ENCODE measurements at regions of chr12 and their contacts with region 1.

Region 1: GRCh38 chr12:54368709-54369583 is 4.7 kb upstream of the GPR84 start:
- DNase-seq: peak; percentile 81 to 88 (median 84)
- H3K4me3 ChIP-seq: peak overlapping the region in 1 of 2 donors; percentile 27
- H3K4me3 Mint-ChIP-seq: peak overlapping the region; percentile 63 to 90 (median 76)
- H3K27ac ChIP-seq: peak overlapping the region; percentile 37
- H3K27ac Mint-ChIP-seq: peak overlapping the region; percentile 30 to 86 (median 79)
- H3K4me1 ChIP-seq: peaks cover 33% of the 10 kb centered on the region
- H3K4me1 Mint-ChIP-seq: peaks cover 20 to 50% (median 31%) of the 10 kb centered on the region in 4 donors
- H3K27me3 ChIP-seq: no peaks in the 10 kb centered on the region
- H3K27me3 Mint-ChIP-seq: peaks cover 0 to 3% of the 10 kb centered on the region in 2 donors

Region 2: GRCh38 chr12:54220092-54220557 is 148.8 kb before region 1 on chr12:
- CTCF ChIA-PET with region 1: interaction called, 6 read pairs
- POLR2A ChIA-PET with region 1: interaction called, 4 read pairs
- intact Hi-C with region 1: loop called (anchors 1 kb)
- DNase-seq: peak; percentile 51 to 66 (median 56)
- H3K4me3 ChIP-seq: no peak overlapping the region
- H3K4me3 Mint-ChIP-seq: no peak overlapping the region
- H3K27ac ChIP-seq: no peak overlapping the region
- H3K27ac Mint-ChIP-seq: no peak overlapping the region
- H3K4me1 ChIP-seq: peaks cover 26% of the 10 kb centered on the region
- H3K4me1 Mint-ChIP-seq: peaks cover 16 to 34% (median 24%) of the 10 kb centered on the region in 4 donors
- H3K27me3 ChIP-seq: no peaks in the 10 kb centered on the region
- H3K27me3 Mint-ChIP-seq: no peaks in the 10 kb centered on the region

Region 3: GRCh38 chr12:54251667-54252284 is 117.2 kb before region 1 on chr12:
- CTCF ChIA-PET with region 1: interaction called, 34 read pairs
- POLR2A ChIA-PET with region 1: interaction called, 9 read pairs
- intact Hi-C with region 1: loop called (anchors 1 kb)
- DNase-seq: peak in 4 of 5 donors; percentile 36 to 52 (median 46)
- H3K4me3 ChIP-seq: no peak overlapping the region
- H3K4me3 Mint-ChIP-seq: no peak overlapping the region
- H3K27ac ChIP-seq: no peak overlapping the region
- H3K27ac Mint-ChIP-seq: peak overlapping the region in 1 of 7 donors; percentile 63
- H3K4me1 ChIP-seq: no peaks in the 10 kb centered on the region
- H3K4me1 Mint-ChIP-seq: peaks cover 4 to 9% (median 6%) of the 10 kb centered on the region in 4 donors
- H3K27me3 ChIP-seq: no peaks in the 10 kb centered on the region
- H3K27me3 Mint-ChIP-seq: no peaks in the 10 kb centered on the region

Region 4: DNA sequence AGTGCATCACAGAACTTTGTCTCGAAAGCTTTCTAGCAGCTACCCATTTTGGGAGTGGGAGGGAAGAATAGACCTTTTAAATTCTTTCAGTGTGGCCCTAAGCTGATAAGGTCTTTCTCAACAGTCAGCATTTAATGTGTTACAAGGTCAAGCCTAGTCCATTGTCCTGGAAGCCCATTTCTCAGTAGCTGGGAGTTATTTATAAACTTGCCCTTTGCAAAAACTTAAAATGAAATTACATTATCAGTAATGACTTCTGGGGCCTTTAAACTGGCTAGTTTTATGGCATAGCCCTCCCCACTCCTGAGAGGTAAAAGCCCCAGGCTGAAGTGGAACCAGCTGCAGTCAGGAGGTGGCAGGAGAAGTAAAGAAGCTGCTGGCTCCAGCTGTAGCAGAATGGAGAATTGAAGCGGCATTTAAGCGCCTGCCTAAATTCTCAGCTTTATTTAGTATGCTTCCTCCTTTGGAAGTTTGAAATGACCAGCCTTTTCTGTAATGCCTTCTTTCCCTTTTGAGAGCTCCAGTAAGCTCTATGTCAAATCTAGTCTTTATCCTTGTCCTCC is 31.6 kb before region 1 on chr12:
- CTCF ChIA-PET with region 1: interaction called, 67 read pairs
- POLR2A ChIA-PET with region 1: interaction called, 3 read pairs
- intact Hi-C with region 1: loop called (anchors 1 kb)
- DNase-seq: no peak
- H3K4me3 ChIP-seq: no peak overlapping the region
- H3K4me3 Mint-ChIP-seq: no peak overlapping the region
- H3K27ac ChIP-seq: no peak overlapping the region
- H3K27ac Mint-ChIP-seq: peak overlapping the region in 3 of 7 donors; percentile 48 to 51 (median 48)
- H3K4me1 ChIP-seq: peaks cover 4% of the 10 kb centered on the region
- H3K4me1 Mint-ChIP-seq: peaks cover 6 to 29% (median 15%) of the 10 kb centered on the region in 4 donors
- H3K27me3 ChIP-seq: no peaks in the 10 kb centered on the region
- H3K27me3 Mint-ChIP-seq: no peaks in the 10 kb centered on the region

Region 5: DNA sequence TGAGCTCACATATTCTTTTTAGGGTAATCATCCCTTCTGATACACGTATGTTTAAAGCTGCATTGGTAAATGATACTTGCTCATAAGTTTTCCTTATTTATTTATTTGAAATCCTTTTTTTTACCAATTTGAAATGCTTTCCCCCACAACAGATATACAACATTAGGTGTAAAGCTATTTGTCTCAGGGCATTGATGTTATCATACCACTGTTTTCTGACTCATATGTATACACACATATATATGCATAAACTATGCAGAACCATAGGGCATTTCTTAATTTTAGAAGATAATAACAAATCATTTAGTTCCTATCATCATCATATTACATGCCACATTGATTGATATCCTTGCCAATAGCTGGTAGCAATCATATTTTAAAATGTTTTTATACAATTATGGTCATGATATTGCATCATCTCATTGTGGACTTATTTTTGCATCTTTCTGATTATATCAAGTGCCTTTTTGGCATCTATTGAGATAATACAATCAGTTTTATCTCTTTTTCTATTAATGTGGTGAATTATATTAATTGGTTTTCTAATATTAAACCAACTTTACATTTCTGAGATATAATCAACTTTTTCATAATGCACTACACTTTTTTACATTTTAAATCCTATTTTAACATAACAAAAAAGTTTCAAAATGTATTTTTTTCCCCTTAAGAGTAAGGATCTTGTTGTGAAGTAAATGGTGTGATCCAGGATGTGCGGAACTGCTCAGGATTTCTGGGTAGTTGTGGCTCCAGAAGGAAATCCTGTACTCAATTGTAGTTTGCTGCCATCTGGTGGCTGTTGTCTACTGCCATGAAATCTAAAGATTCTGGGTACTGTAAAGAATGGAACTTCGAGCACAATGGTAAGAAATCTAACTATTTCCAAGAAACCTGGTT is 774.0 kb after region 1 on chr12:
- CTCF ChIA-PET with region 1: no interaction called
- POLR2A ChIA-PET with region 1: no interaction called
- intact Hi-C with region 1: no loop called
- DNase-seq: peak in 4 of 5 donors; percentile 17 to 33 (median 26)
- H3K4me3 ChIP-seq: no peak overlapping the region
- H3K4me3 Mint-ChIP-seq: no peak overlapping the region
- H3K27ac ChIP-seq: no peak overlapping the region
- H3K27ac Mint-ChIP-seq: no peak overlapping the region
- H3K4me1 ChIP-seq: no peaks in the 10 kb centered on the region
- H3K4me1 Mint-ChIP-seq: peaks cover 0 to 5% (median 2%) of the 10 kb centered on the region in 4 donors
- H3K27me3 ChIP-seq: no peaks in the 10 kb centered on the region
- H3K27me3 Mint-ChIP-seq: peaks cover 5 to 6% of the 10 kb centered on the region in 2 donors